ENCODE measurements at regions of chr15 and their contacts with region 1.

Region 1: GRCh38 chr15:45510758-45511280 is 11.7 kb downstream of the SLC30A4 start:
- DNase-seq: no peak
- H3K4me3 ChIP-seq: no peak overlapping the region
- H3K27ac ChIP-seq: no peak overlapping the region
- H3K4me1 ChIP-seq: no peaks in the 10 kb centered on the region
- H3K27me3 ChIP-seq: no peaks in the 10 kb centered on the region
- CTCF ChIP-seq: no peak
- EP300 ChIP-seq: no peak
- POLR2A ChIP-seq: no peak

Region 2: DNA sequence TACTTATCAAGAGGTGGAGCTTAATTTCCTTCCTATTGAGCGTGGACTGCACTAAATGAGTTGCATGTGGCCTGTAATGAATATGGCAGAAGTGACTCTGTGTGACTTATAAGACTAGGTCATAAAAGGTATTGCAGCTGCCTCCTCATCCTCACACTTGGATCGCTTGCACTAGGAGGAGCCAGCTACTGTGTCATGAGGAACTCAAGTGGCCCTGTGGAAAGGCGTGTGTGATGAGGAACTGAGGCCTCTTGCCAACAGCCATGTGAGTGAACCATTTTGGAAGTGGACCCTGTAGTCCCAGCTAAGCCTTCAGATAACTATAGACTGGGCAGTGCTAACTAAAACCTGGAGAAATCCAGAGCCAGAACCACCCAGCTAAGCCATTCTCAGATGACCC is 18.8 kb after region 1 on chr15:
- in situ Hi-C with region 1: no loop called
- intact Hi-C with region 1: loop called (anchors 1 kb)
- DNase-seq: no peak
- H3K4me3 ChIP-seq: no peak overlapping the region
- H3K27ac ChIP-seq: no peak overlapping the region
- H3K4me1 ChIP-seq: peaks cover 0 to 10% (median 0%) of the 10 kb centered on the region in 4 donors
- H3K27me3 ChIP-seq: no peaks in the 10 kb centered on the region
- CTCF ChIP-seq: no peak
- EP300 ChIP-seq: no peak
- POLR2A ChIP-seq: no peak

Measured in transverse colon (tissue), 4 donors.